ENCODE measurements at regions of chr13 and their contacts with region 1.

Region 1: DNA sequence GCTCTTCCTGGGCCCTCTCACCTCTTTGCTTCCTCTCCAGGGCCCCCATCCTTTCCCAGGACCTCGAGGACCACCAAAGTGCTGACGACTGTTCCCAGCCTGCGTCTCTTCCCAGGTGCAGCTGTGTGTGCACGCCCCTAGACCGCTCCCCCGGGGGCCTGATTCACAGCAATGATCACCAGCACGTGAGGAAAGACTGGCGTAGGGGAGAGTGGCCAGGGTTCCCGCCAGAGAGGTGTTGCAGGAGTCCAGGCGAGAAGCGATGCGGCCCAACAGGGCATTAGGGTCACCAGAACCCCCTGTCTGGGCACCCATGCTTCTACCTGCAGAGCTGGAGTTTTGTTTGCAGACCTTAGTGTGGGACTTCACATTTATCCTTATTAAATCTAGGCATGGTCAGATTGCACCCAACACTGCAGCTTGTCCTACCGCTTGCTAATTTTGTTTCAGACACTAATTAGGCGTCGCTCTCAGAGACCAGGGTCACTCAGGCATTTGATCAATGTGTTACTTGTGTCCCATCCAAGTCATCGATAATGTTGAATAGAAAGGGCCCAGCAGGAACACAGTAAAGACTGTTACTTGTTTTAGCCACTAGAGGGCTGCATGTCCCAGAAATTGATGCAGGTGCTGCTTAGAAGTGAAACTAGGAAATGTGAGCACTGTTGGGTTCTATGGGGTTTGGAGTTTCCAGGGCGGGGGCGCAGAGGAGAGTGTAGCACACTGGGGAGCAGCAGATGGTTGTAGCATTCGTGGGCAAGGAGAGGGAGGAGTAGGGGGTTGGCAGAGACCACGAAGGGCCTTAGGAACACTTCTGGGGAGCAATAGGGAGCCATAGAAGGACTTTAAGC is 53.2 kb downstream of the CDADC1 start:
- DNase-seq: peak in 4 of 5 donors; percentile 57 to 79 (median 69)
- H3K4me3 ChIP-seq: peak overlapping the region in 2 of 3 donors; percentile 48 to 62
- H3K27ac ChIP-seq: no peak overlapping the region
- H3K4me1 ChIP-seq: peaks cover 0 to 3% (median 3%) of the 10 kb centered on the region in 3 donors
- H3K27me3 ChIP-seq: no peaks in the 10 kb centered on the region
- CTCF ChIP-seq: peak; percentile 89

Region 2: DNA sequence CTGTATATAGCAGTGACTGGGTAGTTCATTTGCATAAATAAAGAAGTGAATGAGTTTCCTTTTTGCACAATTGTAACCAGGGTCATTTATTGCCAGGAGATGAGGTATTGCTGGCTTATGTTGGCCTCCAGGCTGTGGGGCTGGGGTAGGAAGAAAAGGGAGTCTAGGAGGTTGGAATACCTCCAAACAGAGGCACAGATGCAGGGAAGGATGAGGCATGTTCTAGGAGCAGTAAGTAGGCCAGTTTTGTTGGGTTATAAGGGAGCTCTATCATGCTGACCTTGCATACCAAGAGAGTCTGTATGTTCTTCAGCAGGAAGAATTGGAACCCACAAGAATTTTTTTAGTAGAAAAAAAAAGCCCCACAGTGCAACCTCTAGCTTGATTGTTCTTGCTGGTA is 664.4 kb before region 1 on chr13:
- intact Hi-C with region 1: no loop called
- DNase-seq: no peak
- H3K4me3 ChIP-seq: no peak overlapping the region
- H3K27ac ChIP-seq: no peak overlapping the region
- H3K4me1 ChIP-seq: no peaks in the 10 kb centered on the region
- H3K27me3 ChIP-seq: no peaks in the 10 kb centered on the region
- CTCF ChIP-seq: no peak

Region 3: GRCh38 chr13:49436890-49437289 is 135.9 kb after region 1 on chr13:
- intact Hi-C with region 1: loop called (anchors 5 kb)
- DNase-seq: peak in 2 of 5 donors; percentile 27 to 64
- H3K4me3 ChIP-seq: no peak overlapping the region
- H3K27ac ChIP-seq: no peak overlapping the region
- H3K4me1 ChIP-seq: no peaks in the 10 kb centered on the region
- H3K27me3 ChIP-seq: no peaks in the 10 kb centered on the region
- CTCF ChIP-seq: no peak

Region 4: DNA sequence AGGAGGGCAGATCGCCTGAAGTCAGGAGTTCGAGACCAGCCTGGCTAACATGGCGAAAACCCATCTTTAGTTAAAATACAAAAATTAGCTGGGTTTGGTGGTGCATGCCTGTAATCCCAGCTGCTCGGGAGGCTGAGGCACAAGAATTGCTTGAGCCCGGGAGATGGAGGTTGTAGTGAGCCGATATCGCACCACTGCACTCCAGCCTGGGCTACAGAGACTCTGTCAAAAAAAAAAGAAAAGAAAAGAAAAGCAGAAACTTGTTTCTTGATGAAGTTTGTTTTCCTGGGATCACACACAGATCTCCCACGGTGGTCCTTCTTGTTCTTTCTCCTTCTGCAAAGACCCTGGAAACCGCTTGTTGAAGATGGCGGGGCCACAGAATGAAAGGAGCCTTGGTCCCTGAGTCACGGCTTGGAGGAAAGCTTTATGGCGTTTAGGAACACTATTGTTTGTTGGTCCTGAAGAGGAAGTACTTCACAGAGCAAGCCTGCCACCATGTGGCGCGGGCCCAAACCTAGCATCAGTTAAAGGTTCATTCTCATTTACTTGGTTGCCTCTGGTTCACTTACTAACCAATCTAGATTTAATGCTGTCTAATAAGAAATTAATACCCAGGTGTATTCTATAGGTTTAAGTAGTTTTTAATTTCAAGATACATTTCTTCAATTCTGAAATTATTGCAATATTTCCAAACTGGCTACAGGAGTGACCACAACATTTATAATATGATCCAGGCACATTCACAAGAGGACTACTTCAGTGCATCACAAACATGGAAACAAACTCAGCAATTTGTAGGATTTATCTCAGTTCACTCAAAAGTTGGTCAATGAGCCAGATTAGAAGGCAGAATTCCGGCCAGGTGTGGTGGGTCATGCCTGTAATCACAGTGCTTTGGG is 306.0 kb after region 1 on chr13:
- intact Hi-C with region 1: loop called (anchors 5 kb)
- DNase-seq: peak; percentile 85 to 95 (median 92)
- H3K4me3 ChIP-seq: peak overlapping the region; percentile 18 to 52 (median 45)
- H3K27ac ChIP-seq: no peak overlapping the region
- H3K4me1 ChIP-seq: peaks cover 0 to 3% (median 0%) of the 10 kb centered on the region in 3 donors
- H3K27me3 ChIP-seq: no peaks in the 10 kb centered on the region
- CTCF ChIP-seq: peak; percentile 90